Kidney (tissue), 22 donors: ENCODE measurements at regions of chr10 and their contacts with region 1.

Region 1: GRCh38 chr10:35218339-35218955 is 91.8 kb downstream of the CREM start:
- DNase-seq: peak; percentile 81 to 96 (median 87)
- H3K4me3 ChIP-seq: no peak overlapping the region
- H3K27ac ChIP-seq: no peak overlapping the region
- H3K4me1 ChIP-seq: peaks cover 0 to 7% (median 3%) of the 10 kb centered on the region in 3 donors
- H3K27me3 ChIP-seq: no peaks in the 10 kb centered on the region
- CTCF ChIP-seq: peak; percentile 85

Region 2: GRCh38 chr10:35124540-35124939 is 93.9 kb before region 1 on chr10:
- intact Hi-C with region 1: loop called (anchors 5 kb)
- DNase-seq: no peak
- H3K4me3 ChIP-seq: no peak overlapping the region
- H3K27ac ChIP-seq: no peak overlapping the region
- H3K4me1 ChIP-seq: peaks cover 0 to 4% (median 0%) of the 10 kb centered on the region in 3 donors
- H3K27me3 ChIP-seq: no peaks in the 10 kb centered on the region
- CTCF ChIP-seq: no peak